Activated naive CD4-positive, alpha-beta T cell treated with anti-CD3 and anti-CD28 coated beads for 36 hours (primary cell): ENCODE measurements at regions of chr15 and their contacts with region 1.

Region 1: GRCh38 chr15:67150028-67150860 is 84.8 kb downstream of the SMAD3 start:
- DNase-seq: peak; percentile 72
- H3K4me3 Mint-ChIP-seq: peak overlapping the region; percentile 59
- H3K27ac Mint-ChIP-seq: peak overlapping the region; percentile 91
- H3K4me1 Mint-ChIP-seq: peaks cover 67% of the 10 kb centered on the region
- H3K27me3 Mint-ChIP-seq: no peaks in the 10 kb centered on the region

Region 2: DNA sequence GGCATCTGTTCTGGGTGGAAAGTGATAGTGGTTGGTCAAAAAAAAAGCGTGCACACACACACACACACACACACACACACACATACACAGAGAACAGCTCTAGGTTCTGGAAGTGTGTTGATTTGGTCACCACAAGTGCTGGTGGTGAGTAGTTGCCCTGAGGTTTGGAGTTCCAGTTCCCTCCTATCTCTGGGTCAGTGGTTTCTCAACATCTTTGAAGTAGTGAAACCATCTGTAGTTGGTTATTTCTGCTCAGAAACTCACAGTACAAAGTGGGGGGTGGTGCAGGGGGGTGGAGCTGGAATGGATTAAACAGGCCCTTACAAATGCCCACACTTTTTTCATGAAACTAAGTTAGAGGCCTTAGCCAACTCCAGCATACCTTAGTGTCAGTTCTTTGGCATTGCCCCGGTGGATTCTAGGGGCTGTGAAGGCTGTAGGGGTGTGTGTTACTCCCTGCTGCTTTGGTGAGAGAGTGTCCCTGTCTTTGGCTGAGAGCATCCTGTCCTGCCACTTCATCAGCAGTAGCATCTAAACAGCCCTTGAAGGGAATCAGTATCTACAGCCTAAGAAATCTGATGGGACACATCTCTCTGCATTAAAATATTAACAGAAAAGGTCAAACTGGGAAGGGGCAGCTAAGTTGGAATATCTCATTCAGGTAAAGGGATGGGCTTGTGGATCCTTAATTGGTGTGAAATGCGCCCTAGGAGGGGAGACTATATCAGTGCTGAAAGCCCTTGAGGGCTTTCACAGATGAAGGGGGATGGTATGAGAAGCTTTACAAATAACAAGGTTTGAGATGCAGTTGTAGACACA is 64.2 kb before region 1 on chr15:
- CTCF ChIA-PET with region 1: interaction called, 3 read pairs
- intact Hi-C with region 1: loop called (anchors 1 kb)
- DNase-seq: peak; percentile 44
- H3K4me3 Mint-ChIP-seq: no peak overlapping the region
- H3K27ac Mint-ChIP-seq: peak overlapping the region; percentile 78
- H3K4me1 Mint-ChIP-seq: peaks cover 88% of the 10 kb centered on the region
- H3K27me3 Mint-ChIP-seq: no peaks in the 10 kb centered on the region

Region 3: DNA sequence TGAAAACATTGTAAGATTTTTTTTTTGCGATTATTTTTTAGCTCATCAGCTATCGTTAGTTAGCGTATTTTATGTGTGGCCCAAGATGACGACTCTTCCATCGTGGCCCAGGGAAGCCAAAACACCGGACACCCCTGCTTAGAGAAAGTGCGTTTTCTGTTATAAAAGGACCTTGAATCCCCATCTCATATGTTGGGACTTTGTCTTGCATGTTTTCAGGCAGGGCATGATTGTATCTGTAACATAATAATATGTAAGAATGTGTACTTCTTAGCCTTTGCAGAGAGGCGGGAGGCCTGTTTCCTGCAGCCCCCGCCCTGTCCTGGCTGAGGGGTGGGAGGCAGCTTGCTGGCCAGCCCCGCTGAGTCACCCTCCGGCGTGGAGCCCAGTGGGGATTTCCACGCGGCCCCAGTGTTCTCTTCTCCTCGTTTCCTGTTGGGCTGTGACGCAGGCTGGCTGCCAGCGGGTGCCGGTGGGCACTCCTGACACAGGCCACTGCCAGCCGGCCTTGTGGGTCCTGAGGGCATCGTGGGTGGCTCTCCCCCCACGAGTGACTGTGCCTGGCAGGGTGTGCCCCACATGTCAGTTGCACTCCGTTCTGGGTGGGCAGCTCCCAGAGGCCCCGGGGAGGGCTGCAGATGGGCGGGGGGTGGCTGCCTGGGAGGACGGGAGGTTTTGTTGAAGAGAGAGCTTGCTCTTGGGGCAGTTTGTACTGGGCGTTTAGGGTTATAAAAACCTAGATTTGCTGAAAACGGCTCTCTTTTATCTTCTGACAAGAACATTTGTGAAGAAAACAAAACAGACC is 29.2 kb before region 1 on chr15:
- CTCF ChIA-PET with region 1: interaction called, 4 read pairs
- intact Hi-C with region 1: loop called (anchors 1 kb)
- DNase-seq: peak; percentile 94
- H3K4me3 Mint-ChIP-seq: peak overlapping the region; percentile 70
- H3K27ac Mint-ChIP-seq: peak overlapping the region; percentile 95
- H3K4me1 Mint-ChIP-seq: peaks cover 80% of the 10 kb centered on the region
- H3K27me3 Mint-ChIP-seq: no peaks in the 10 kb centered on the region

Region 4: GRCh38 chr15:67134067-67134838 is 16.0 kb before region 1 on chr15:
- CTCF ChIA-PET with region 1: no interaction called
- intact Hi-C with region 1: loop called (anchors 1 kb)
- DNase-seq: peak; percentile 84
- H3K4me3 Mint-ChIP-seq: peak overlapping the region; percentile 79
- H3K27ac Mint-ChIP-seq: peak overlapping the region; percentile 93
- H3K4me1 Mint-ChIP-seq: peaks cover 85% of the 10 kb centered on the region
- H3K27me3 Mint-ChIP-seq: no peaks in the 10 kb centered on the region

Region 5: GRCh38 chr15:67196672-67197363 is 46.6 kb after region 1 on chr15:
- CTCF ChIA-PET with region 1: no interaction called
- intact Hi-C with region 1: no loop called
- DNase-seq: no peak
- H3K4me3 Mint-ChIP-seq: no peak overlapping the region
- H3K27ac Mint-ChIP-seq: peak overlapping the region; percentile 15
- H3K4me1 Mint-ChIP-seq: peaks cover 12% of the 10 kb centered on the region
- H3K27me3 Mint-ChIP-seq: no peaks in the 10 kb centered on the region

Region 6: GRCh38 chr15:67254238-67255175 is 104.3 kb after region 1 on chr15 and contains the starts of genes AAGAB and IQCH:
- CTCF ChIA-PET with region 1: no interaction called
- intact Hi-C with region 1: loop called (anchors 1 kb)
- DNase-seq: peak; percentile 97
- H3K4me3 Mint-ChIP-seq: peak within 1 kb of the TSS; percentile 100
- H3K27ac Mint-ChIP-seq: peak within 1 kb of the TSS; percentile 96
- H3K4me1 Mint-ChIP-seq: peaks cover 38% of the 10 kb centered on the region
- H3K27me3 Mint-ChIP-seq: no peaks in the 10 kb centered on the region
- total RNA-seq, gene AAGAB: 47.2 to 48.8 TPM
- total RNA-seq, gene IQCH: 0.98 to 1.4 TPM